Activated CD4-positive, alpha-beta T cell treated with anti-CD3 and anti-CD28 coated beads for 36 hours (primary cell): ENCODE measurements at regions of chr9 and their contacts with region 1.

Region 1: GRCh38 chr9:36218411-36218901 is 27.7 kb downstream of the CLTA start:
- DNase-seq: peak; percentile 23
- ATAC-seq: peak; percentile 80
- H3K4me3 Mint-ChIP-seq: no peak overlapping the region
- H3K27ac Mint-ChIP-seq: peak overlapping the region; percentile 86
- H3K4me1 Mint-ChIP-seq: peaks cover 37% of the 10 kb centered on the region
- H3K27me3 Mint-ChIP-seq: no peaks in the 10 kb centered on the region

Region 2: GRCh38 chr9:36284226-36284625 is 65.8 kb after region 1 on chr9:
- CTCF ChIA-PET with region 1: no interaction called
- POLR2A ChIA-PET with region 1: no interaction called
- intact Hi-C with region 1: loop called in 1 of 2 experiments (anchors 10 kb)
- DNase-seq: no peak
- ATAC-seq: no peak
- H3K4me3 Mint-ChIP-seq: no peak overlapping the region
- H3K27ac Mint-ChIP-seq: no peak overlapping the region
- H3K4me1 Mint-ChIP-seq: no peaks in the 10 kb centered on the region
- H3K27me3 Mint-ChIP-seq: no peaks in the 10 kb centered on the region

Region 3: GRCh38 chr9:36337865-36338264 is 119.4 kb after region 1 on chr9:
- CTCF ChIA-PET with region 1: no interaction called
- POLR2A ChIA-PET with region 1: no interaction called
- intact Hi-C with region 1: loop called in 1 of 2 experiments (anchors 10 kb)
- DNase-seq: no peak
- ATAC-seq: no peak
- H3K4me3 Mint-ChIP-seq: no peak overlapping the region
- H3K27ac Mint-ChIP-seq: peak overlapping the region; percentile 39
- H3K4me1 Mint-ChIP-seq: peaks cover 9% of the 10 kb centered on the region
- H3K27me3 Mint-ChIP-seq: no peaks in the 10 kb centered on the region